Posterior vena cava (tissue), 2 donors: ENCODE measurements at regions of chr3 and their contacts with region 1.

Region 1: GRCh38 chr3:34239875-34240274 is 441.4 kb downstream of the PDCD6IP start:
- DNase-seq: no peak

Region 2: DNA sequence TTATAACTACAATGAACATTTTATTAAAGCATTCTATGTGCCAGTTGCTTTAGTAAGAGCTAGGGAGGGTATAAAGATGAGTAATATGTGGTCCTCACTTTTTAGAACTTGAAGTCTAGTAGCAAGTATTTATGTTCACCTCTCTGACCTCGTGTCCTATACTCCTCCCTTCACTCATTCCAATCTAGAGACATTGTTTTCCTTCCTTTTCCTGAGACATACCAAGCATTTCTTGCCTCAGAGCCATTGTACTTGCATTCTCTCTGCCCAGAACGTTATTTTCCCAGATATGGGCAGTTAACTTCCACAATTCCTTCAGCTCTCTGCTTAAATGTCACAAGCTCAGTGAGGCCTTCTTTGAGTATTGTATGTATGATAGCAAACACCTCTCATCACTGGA is 32.9 kb before region 1 on chr3:
- intact Hi-C with region 1: no loop called
- DNase-seq: no peak

Region 3: DNA sequence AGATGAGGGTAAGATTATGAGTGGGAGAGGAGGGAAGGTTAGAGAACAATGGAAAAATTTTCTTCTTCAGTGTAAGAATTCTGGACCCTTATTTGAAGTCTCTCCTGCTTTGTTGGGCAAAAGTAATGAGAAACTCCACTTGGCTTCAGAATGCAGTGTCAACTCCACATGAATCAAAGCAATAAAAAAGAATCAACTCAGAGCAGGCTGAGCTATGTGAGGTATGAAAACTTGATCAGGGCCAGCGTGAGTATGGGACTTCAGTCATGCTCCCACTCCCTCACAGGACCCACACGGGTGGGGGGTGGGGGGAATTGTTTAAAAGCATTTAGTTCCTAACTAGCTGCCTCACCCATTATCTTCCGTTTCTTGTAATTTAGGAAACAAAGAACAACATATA is 60.7 kb after region 1 on chr3:
- intact Hi-C with region 1: no loop called
- DNase-seq: no peak

Region 4: DNA sequence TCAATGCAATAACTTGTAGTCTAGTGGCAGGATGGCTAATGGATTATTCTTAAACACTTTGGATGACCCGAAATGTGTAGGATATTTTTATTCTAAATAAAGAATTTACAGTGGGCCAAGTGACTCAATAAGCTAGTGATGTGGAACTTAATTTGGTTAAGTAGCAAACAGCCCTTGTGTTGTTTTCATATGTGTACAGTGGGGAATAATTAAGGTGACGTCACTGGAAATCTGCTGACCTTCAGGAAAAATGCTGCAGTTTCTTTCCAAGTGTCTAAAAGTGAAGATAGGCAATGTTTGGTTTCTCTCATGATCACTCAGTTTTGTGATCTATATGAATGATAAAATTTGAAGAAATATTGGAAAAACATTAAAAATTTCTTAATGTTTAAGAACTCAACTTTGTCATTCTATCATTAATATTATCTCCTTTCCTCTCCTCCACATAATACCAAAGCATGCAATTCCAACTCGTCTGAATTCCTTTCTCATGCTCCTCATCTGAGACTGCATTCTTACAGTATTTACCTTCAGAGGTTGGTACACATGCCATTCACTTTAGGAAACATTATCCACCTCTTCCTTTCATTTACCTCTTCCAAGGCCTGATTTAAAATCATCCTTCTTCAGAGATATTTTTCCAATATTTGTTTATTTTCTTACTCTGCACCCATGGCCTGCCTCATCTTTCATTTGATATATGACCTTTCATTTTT is 984.8 kb after region 1 on chr3:
- intact Hi-C with region 1: loop called in 1 of 2 experiments (anchors 5 kb)
- DNase-seq: no peak